Activated naive CD4-positive, alpha-beta T cell treated with anti-CD3 and anti-CD28 coated beads for 36 hours (primary cell): ENCODE measurements at regions of chr20 and their contacts with region 1.

Region 1: GRCh38 chr20:49245921-49246740 is 26.9 kb downstream of the DDX27 start:
- DNase-seq: peak; percentile 48
- H3K4me3 Mint-ChIP-seq: no peak overlapping the region
- H3K27ac Mint-ChIP-seq: peak overlapping the region; percentile 58
- H3K4me1 Mint-ChIP-seq: peaks cover 4% of the 10 kb centered on the region
- H3K27me3 Mint-ChIP-seq: no peaks in the 10 kb centered on the region

Region 2: DNA sequence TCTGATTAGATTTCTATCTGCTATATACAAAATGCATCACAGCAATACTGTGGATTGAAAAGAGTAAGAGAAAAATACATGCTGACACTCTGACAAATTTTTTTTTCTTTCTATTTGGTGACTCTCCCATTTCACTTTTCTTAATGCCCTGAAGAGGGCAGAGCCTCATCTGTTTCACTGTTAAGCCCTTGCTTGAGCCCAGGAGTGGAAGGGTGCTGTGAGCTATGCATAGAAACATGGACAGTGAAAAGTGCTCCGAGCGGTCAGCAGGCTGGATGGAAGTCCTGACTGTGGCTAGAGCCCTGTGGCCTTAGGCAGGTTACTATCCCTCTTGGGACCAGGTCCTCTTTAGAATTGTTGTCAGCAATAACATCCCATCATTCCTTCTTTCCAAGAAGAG is 217.4 kb before region 1 on chr20:
- CTCF ChIA-PET with region 1: no interaction called
- intact Hi-C with region 1: no loop called
- DNase-seq: no peak
- H3K4me3 Mint-ChIP-seq: no peak overlapping the region
- H3K27ac Mint-ChIP-seq: no peak overlapping the region
- H3K4me1 Mint-ChIP-seq: no peaks in the 10 kb centered on the region
- H3K27me3 Mint-ChIP-seq: no peaks in the 10 kb centered on the region

Region 3: DNA sequence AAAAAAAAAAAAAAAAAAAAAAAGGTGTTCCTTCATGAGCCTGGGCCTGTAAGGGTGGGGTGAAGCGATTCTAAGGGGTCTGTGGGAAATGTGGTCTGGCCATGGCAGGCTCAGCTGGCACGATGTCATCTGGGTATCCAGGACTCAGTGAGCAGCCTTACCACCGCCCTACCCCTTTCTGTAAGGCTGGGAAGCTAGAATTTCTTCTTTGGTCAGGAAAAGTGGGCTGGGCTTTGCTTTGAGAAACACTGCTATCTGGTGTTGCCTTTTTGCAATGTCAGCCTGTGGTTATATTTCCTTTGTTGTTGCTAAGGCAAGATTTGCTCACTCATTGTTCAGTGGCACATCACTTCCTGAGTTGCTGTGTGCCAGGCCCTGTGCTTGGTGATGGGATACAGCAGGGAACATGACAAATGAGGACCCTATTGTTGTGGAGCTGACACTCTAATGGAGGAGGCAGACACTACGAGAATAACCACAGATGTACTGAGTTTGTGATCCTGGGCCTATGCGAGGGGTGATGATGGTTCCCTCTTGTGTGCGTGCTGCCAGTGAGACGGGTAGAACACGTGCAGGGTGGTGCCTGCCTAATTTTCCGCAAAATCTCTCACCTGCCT is 77.6 kb after region 1 on chr20:
- CTCF ChIA-PET with region 1: interaction called, 16 read pairs
- intact Hi-C with region 1: loop called (anchors 1 kb)
- DNase-seq: peak; percentile 49
- H3K4me3 Mint-ChIP-seq: no peak overlapping the region
- H3K27ac Mint-ChIP-seq: no peak overlapping the region
- H3K4me1 Mint-ChIP-seq: peaks cover 18% of the 10 kb centered on the region
- H3K27me3 Mint-ChIP-seq: peaks cover 27% of the 10 kb centered on the region

Region 4: GRCh38 chr20:49747707-49748524 is 501.8 kb after region 1 on chr20:
- CTCF ChIA-PET with region 1: no interaction called
- intact Hi-C with region 1: no loop called
- DNase-seq: peak; percentile 14
- H3K4me3 Mint-ChIP-seq: no peak overlapping the region
- H3K27ac Mint-ChIP-seq: no peak overlapping the region
- H3K4me1 Mint-ChIP-seq: peaks cover 5% of the 10 kb centered on the region
- H3K27me3 Mint-ChIP-seq: peaks cover 8% of the 10 kb centered on the region